Prostate gland (tissue), 2 donors: ENCODE measurements at regions of chr1 and their contacts with region 1.

Region 1: DNA sequence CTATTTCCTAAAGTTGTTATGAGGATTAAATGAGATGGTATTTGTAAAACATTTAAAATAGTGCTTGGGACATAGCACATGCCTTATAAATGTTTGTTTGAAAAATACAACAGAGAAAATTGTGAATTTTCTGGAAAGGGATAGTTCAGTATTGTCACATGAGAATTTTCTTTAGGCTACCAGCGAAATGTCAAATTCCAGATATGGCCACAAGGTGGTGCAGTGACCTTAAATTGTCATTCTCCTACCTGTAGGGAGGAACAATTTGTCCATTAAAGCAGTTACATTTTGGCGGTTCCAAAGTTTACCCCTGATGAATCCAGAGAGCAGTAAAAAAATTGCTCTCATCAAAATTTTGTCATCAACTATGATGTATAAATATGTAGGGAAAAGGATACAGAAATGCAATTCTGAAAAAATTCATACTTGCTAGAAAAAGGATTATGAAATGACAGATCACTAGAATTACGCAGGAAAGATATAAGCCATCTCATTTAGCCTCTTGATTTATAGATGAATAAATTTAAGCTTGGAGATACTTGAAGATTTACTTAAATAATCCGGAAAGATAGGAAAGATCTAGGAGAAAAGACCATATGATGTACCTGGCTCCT is 50.2 kb upstream of the TSHB start:
- DNase-seq: peak; percentile 63
- H3K4me3 ChIP-seq: no peak overlapping the region
- H3K27ac ChIP-seq: no peak overlapping the region
- H3K4me1 ChIP-seq: no peaks in the 10 kb centered on the region
- H3K27me3 ChIP-seq: no peaks in the 10 kb centered on the region
- CTCF ChIP-seq: peak; percentile 51 to 91 (median 82)
- POLR2A ChIP-seq: no peak

Region 2: GRCh38 chr1:114868766-114869165 is 110.6 kb before region 1 on chr1:
- intact Hi-C with region 1: no loop called
- DNase-seq: no peak
- H3K4me3 ChIP-seq: no peak overlapping the region
- H3K27ac ChIP-seq: no peak overlapping the region
- H3K4me1 ChIP-seq: no peaks in the 10 kb centered on the region
- H3K27me3 ChIP-seq: no peaks in the 10 kb centered on the region
- CTCF ChIP-seq: no peak
- POLR2A ChIP-seq: no peak

Region 3: GRCh38 chr1:115056395-115056798 is 77.0 kb after region 1 on chr1:
- intact Hi-C with region 1: loop called (anchors 5 kb)
- DNase-seq: no peak
- H3K4me3 ChIP-seq: no peak overlapping the region
- H3K27ac ChIP-seq: no peak overlapping the region
- H3K4me1 ChIP-seq: no peaks in the 10 kb centered on the region
- H3K27me3 ChIP-seq: no peaks in the 10 kb centered on the region
- CTCF ChIP-seq: no peak
- POLR2A ChIP-seq: no peak

Region 4: GRCh38 chr1:115112496-115113375 is 133.4 kb after region 1 on chr1:
- intact Hi-C with region 1: loop called (anchors 1 kb)
- DNase-seq: peak; percentile 16
- H3K4me3 ChIP-seq: no peak overlapping the region
- H3K27ac ChIP-seq: no peak overlapping the region
- H3K4me1 ChIP-seq: no peaks in the 10 kb centered on the region
- H3K27me3 ChIP-seq: no peaks in the 10 kb centered on the region
- CTCF ChIP-seq: peak; percentile 82 to 94 (median 92)
- POLR2A ChIP-seq: no peak

Region 5: DNA sequence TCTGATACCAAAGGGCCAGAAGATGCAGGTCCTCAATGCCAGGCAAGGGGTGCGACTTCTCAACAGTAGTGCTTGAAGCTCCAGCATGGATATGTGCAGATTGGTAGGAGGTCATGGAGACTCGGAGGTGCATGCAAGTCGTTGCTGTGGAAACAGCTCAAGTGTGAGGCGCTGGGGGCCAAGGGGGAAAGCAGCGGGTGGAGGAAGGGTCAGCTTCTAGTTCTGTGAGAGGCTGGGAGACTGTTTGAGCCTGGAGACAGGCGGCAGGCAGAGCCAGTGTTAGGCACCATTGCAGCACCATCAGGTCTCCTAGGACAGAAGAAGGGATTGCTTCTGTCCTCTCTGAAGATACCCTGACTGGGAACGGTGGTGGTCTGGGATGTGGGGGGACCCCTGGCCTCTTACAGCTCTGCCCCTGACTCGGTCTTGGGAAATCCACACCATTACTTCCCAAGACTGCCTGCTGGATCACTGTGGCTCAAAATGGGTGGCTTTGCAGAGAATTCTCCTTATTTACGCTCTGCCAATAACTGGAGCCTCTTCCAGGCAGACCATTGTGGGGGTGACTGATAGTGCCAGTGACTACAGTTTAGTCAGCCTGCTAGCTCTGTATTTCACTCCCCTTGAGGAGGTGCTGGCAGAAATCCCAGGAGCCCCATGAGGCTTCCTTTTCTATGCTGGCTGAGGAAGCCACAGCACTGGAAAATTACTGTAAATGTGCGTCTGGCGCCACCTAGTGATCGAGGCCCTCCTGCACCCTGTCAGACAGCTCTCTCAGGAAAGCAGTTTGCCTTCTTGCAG is 616.1 kb after region 1 on chr1:
- intact Hi-C with region 1: loop called (anchors 10 kb)
- DNase-seq: peak; percentile 72
- H3K4me3 ChIP-seq: no peak overlapping the region
- H3K27ac ChIP-seq: no peak overlapping the region
- H3K4me1 ChIP-seq: no peaks in the 10 kb centered on the region
- H3K27me3 ChIP-seq: no peaks in the 10 kb centered on the region
- CTCF ChIP-seq: peak; percentile 51 to 88 (median 82)
- POLR2A ChIP-seq: no peak